ENCODE measurements at regions of chr22 and their contacts with region 1.

Region 1: GRCh38 chr22:45284705-45285262 is at the start of gene UPK3A:
- DNase-seq: peak; percentile 71 to 90
- H3K4me3 ChIP-seq: peak within 1 kb of the TSS; percentile 59; the same call in 1 of the 2 replicates
- H3K27ac ChIP-seq: no peak within 1 kb of the TSS
- H3K4me1 ChIP-seq: peaks cover 28% of the 10 kb centered on the region
- H3K27me3 ChIP-seq: peaks cover 6% of the 10 kb centered on the region; the same call in 1 of the 2 replicates
- CTCF ChIP-seq: no peak
- total RNA-seq, gene UPK3A: 1.0 and 1.4 TPM in 2 replicates

Region 2: DNA sequence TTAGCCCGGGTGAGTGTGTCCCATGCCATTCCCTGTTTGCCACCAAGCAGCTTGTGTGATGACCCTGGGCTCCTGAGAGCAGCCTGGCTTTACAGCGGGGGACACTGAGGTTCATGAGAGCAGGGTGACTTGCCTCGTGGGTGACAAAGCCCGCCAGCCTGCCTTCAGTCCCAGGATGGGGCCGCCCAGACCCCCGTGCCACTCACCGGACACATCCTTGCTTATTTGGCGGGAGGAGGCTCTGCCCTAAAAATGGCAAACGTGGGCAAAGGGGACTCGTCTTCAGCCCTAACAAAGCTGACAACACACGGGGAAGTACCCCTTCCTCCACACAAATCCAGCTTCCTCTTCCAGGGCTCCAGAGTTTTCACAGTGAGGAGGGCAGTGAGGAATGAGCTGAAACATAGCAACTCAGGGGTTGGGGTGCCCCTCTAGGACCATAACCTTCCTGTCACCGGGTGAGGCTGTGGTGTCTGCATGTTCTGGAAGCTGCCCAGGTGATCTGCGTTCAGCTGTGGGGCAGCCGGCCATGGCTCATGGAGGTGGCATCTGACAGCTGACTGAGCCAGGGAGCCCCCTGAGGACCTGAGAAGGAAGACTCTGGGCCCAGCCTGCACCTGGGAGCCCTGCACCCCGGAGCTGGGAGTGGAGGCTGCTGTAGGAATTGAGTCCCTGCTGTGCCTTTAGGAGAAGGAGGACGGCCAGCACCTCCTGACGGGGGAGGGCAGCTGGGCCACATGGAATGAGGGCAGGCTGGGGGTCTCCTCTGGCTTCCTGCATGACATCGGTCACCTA is 145.4 kb after region 1 on chr22:
- CTCF ChIA-PET with region 1: no interaction called
- POLR2A ChIA-PET with region 1: no interaction called
- intact Hi-C with region 1: loop called (anchors 5 kb)
- DNase-seq: no peak
- H3K4me3 ChIP-seq: no peak overlapping the region
- H3K27ac ChIP-seq: no peak overlapping the region
- H3K4me1 ChIP-seq: peaks cover 7% of the 10 kb centered on the region
- H3K27me3 ChIP-seq: no peaks in the 10 kb centered on the region
- CTCF ChIP-seq: no peak

Measured in PC-9 (cell line).